PC-3 (cell line): ENCODE measurements at regions of chr14 and their contacts with region 1.

Region 1: GRCh38 chr14:41586237-41586636 is 20.4 kb upstream of the LRFN5 start:
- DNase-seq: peak; percentile 18
- ATAC-seq: peak; percentile 63
- H3K4me3 ChIP-seq: no peak overlapping the region
- H3K27ac ChIP-seq: no peak overlapping the region
- H3K4me1 ChIP-seq: no peaks in the 10 kb centered on the region
- H3K27me3 ChIP-seq: no peaks in the 10 kb centered on the region
- CTCF ChIP-seq: peak; percentile 47; the same call in 1 of the 2 replicates

Region 2: DNA sequence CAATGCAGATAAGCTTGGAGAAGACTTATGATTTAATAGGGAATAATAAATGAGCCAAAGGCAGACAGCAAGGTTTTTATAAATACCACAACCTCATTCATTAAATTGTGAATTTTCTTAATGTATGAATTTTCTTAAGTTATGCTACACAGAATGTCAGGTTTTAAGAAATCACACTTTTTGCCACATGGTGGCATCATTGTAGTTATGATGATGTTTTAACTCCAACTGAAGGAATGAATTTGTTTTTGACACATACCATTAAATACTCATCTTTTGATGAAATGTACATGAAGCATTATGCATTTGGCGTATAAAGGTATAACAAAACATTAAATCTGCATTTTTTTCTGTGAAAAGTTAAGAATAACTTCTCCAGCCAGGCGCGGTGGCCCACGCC is 1629.9 kb before region 1 on chr14:
- CTCF ChIA-PET with region 1: no interaction called
- POLR2A ChIA-PET with region 1: no interaction called
- intact Hi-C with region 1: loop called (anchors 5 kb)
- DNase-seq: peak; percentile 63
- ATAC-seq: peak; percentile 63
- H3K4me3 ChIP-seq: no peak overlapping the region
- H3K27ac ChIP-seq: no peak overlapping the region
- H3K4me1 ChIP-seq: no peaks in the 10 kb centered on the region
- H3K27me3 ChIP-seq: no peaks in the 10 kb centered on the region
- CTCF ChIP-seq: peak; percentile 71

Region 3: DNA sequence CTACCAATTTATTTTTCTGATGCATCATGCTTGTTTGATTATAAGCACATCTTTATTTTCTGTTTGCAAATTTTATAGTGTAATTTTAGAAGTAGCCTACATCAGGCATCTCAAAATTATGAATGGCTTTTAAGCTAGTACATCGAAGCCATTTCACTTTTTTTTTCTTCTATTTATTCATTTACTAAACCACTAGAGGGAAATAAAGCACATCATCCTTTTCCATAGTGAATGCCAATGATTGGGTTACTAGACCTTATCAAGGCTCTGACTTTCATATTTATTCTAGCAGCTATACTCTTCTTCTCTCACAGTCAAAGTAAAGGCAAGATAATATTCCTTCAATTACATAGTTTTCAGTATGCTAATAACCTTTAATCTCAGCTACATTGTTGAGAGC is 716.0 kb before region 1 on chr14:
- CTCF ChIA-PET with region 1: no interaction called
- POLR2A ChIA-PET with region 1: no interaction called
- intact Hi-C with region 1: loop called (anchors 2 kb)
- DNase-seq: peak; percentile 33
- ATAC-seq: peak; percentile 56
- H3K4me3 ChIP-seq: no peak overlapping the region
- H3K27ac ChIP-seq: no peak overlapping the region
- H3K4me1 ChIP-seq: no peaks in the 10 kb centered on the region
- H3K27me3 ChIP-seq: no peaks in the 10 kb centered on the region
- CTCF ChIP-seq: peak; percentile 52; the same call in 1 of the 2 replicates

Region 4: GRCh38 chr14:41280745-41281144 is 305.5 kb before region 1 on chr14:
- CTCF ChIA-PET with region 1: interaction called, 3 read pairs
- POLR2A ChIA-PET with region 1: no interaction called
- intact Hi-C with region 1: loop called (anchors 1 kb)
- DNase-seq: peak; percentile 66
- ATAC-seq: peak; percentile 62
- H3K4me3 ChIP-seq: no peak overlapping the region
- H3K27ac ChIP-seq: no peak overlapping the region
- H3K4me1 ChIP-seq: no peaks in the 10 kb centered on the region
- H3K27me3 ChIP-seq: no peaks in the 10 kb centered on the region
- CTCF ChIP-seq: peak; percentile 66

Region 5: GRCh38 chr14:41393512-41393911 is 192.7 kb before region 1 on chr14:
- CTCF ChIA-PET with region 1: no interaction called
- POLR2A ChIA-PET with region 1: no interaction called
- intact Hi-C with region 1: loop called (anchors 10 kb)
- DNase-seq: peak; percentile 13
- ATAC-seq: no peak
- H3K4me3 ChIP-seq: no peak overlapping the region
- H3K27ac ChIP-seq: no peak overlapping the region
- H3K4me1 ChIP-seq: no peaks in the 10 kb centered on the region
- H3K27me3 ChIP-seq: no peaks in the 10 kb centered on the region
- CTCF ChIP-seq: peak; percentile 39; the same call in 1 of the 2 replicates

Region 6: DNA sequence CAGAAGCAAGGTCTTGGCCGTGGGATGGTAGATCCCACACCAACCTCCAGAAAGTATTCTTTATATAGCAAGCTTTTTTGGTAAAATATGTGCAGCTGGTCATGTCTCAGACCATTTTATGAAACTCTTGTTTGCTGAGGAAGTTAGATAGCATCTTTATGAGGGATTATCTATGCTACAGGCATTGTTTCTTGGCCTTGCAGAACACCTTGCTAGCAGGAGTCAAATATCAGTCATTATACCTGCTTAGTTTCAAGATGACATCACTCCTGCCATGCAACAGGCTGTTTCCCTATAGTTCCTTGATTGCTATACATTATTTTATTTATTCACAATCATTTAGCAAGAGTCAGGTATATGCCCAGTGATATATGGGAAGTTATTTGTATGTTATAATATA is 64.3 kb before region 1 on chr14:
- CTCF ChIA-PET with region 1: no interaction called
- POLR2A ChIA-PET with region 1: no interaction called
- intact Hi-C with region 1: loop called (anchors 5 kb)
- DNase-seq: peak; percentile 78
- ATAC-seq: peak; percentile 92
- H3K4me3 ChIP-seq: no peak overlapping the region
- H3K27ac ChIP-seq: peak overlapping the region; percentile 66
- H3K4me1 ChIP-seq: peaks cover 14% of the 10 kb centered on the region
- H3K27me3 ChIP-seq: no peaks in the 10 kb centered on the region
- CTCF ChIP-seq: no peak

Region 7: GRCh38 chr14:41668356-41668755 is 82.1 kb after region 1 on chr14:
- CTCF ChIA-PET with region 1: no interaction called
- POLR2A ChIA-PET with region 1: no interaction called
- intact Hi-C with region 1: no loop called
- DNase-seq: no peak
- ATAC-seq: no peak
- H3K4me3 ChIP-seq: no peak overlapping the region
- H3K27ac ChIP-seq: no peak overlapping the region
- H3K4me1 ChIP-seq: no peaks in the 10 kb centered on the region
- H3K27me3 ChIP-seq: no peaks in the 10 kb centered on the region
- CTCF ChIP-seq: no peak